ENCODE measurements at regions of chr3 and their contacts with region 1.

Region 1: GRCh38 chr3:12948891-12949711 is 107.7 kb upstream of the RPL32 start:
- DNase-seq: peak; percentile 70
- H3K4me3 Mint-ChIP-seq: peak overlapping the region; percentile 27
- H3K27ac Mint-ChIP-seq: peak overlapping the region; percentile 83
- H3K4me1 Mint-ChIP-seq: peaks cover 54% of the 10 kb centered on the region
- H3K27me3 Mint-ChIP-seq: no peaks in the 10 kb centered on the region

Region 2: DNA sequence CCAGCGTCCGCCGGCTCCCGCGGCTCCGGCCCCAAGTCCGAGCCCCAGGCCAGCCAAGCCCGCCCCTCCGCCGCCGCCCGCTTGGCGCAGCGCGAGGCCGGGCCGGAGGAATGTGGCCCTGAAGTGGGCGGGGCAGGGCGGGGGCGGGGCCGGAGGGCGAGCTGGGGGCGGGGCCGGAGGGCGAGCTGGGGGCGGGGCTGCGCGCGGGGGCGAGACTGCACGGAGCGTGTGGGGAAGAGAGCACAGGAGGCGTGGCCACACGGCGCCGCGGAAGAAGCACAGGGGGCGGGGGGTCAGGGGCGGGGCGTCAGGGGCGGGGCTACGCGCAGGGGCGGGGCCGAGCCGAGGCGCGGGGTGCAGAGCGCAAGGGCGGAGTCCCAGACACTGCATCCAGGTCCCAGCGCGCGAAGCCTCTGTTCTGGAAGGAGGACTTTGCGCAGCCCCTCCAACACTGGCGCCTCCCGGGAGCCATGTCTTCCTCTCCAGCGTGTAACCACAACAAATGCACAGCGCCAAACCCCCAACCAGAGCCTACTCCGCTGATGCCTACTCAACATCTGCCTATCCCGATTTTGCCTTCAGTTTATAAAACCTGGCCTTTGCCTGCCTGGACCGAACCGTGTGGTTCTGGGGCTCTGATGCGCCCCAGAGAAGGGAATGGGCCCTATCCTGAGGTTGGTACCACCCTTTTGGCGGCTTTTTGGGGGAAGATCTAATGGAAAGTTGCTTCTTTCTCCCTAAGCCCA is 18.7 kb after region 1 on chr3:
- CTCF ChIA-PET with region 1: interaction called, 3 read pairs
- POLR2A ChIA-PET with region 1: interaction called, 6 read pairs
- intact Hi-C with region 1: loop called (anchors 1 kb)
- DNase-seq: peak; percentile 93
- H3K4me3 Mint-ChIP-seq: peak overlapping the region; percentile 71
- H3K27ac Mint-ChIP-seq: peak overlapping the region; percentile 67
- H3K4me1 Mint-ChIP-seq: peaks cover 58% of the 10 kb centered on the region
- H3K27me3 Mint-ChIP-seq: no peaks in the 10 kb centered on the region

Measured in activated CD4-positive, alpha-beta memory T cell treated with anti-CD3 and anti-CD28 coated beads for 36 hours (primary cell).